CD8-positive, alpha-beta T cell (primary cell): ENCODE measurements at regions of chr1 and their contacts with region 1.

Region 1: DNA sequence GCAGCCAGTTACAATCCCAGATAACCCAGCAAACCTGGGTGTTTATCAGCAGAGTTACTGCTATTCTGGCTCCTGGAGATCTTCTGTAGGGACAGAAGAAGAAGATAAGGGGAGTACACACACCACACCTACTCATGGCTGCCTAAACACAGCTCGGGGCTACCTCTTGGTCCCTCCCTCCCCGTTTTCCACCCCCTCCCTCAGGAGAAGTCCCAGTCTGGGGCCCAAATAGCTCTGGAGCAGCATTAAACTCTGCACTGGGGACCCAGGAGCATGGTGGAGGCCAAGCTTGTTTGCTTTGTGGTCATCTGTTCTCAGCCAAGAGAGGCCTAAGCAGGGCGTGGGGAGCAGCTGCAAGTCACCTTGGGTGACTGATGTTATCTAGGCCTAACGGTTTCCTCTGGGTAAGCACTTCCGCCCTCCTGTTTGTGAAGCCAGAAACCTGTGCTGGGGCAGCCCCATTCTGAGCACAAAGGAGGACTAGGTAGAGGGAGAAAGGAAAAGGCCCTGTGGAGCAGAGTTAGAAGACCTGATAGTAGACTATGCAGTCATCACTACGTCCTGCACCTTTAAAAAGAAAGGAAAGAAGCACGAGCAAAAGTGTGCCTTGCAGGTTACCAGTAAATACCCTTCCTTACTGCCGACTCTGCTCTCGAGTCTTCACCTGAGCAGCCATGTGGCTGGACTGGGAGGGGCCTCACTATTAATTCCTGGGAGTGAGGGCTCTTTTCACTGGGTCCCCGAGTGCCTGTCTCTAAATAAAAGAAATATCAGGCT is 2.0 kb upstream of the RCSD1 start:
- DNase-seq: peak; percentile 44 to 91 (median 73)
- ATAC-seq: peak; percentile 67
- H3K4me3 ChIP-seq: peak overlapping the region; percentile 28 to 96
- H3K4me3 Mint-ChIP-seq: peak overlapping the region; percentile 89
- H3K27ac ChIP-seq: peak overlapping the region; percentile 46 to 94
- H3K27ac Mint-ChIP-seq: peak overlapping the region; percentile 96
- H3K4me1 ChIP-seq: peaks cover 50% of the 10 kb centered on the region
- H3K4me1 Mint-ChIP-seq: peaks cover 63% of the 10 kb centered on the region
- H3K27me3 ChIP-seq: no peaks in the 10 kb centered on the region
- H3K27me3 Mint-ChIP-seq: no peaks in the 10 kb centered on the region
- CTCF ChIP-seq: no peak

Region 2: GRCh38 chr1:167578939-167579521 is 49.0 kb before region 1 on chr1:
- CTCF ChIA-PET with region 1: no interaction called
- POLR2A ChIA-PET with region 1: no interaction called
- intact Hi-C with region 1: no loop called
- DNase-seq: no peak
- ATAC-seq: no peak
- H3K4me3 ChIP-seq: no peak overlapping the region
- H3K4me3 Mint-ChIP-seq: no peak overlapping the region
- H3K27ac ChIP-seq: no peak overlapping the region
- H3K27ac Mint-ChIP-seq: no peak overlapping the region
- H3K4me1 ChIP-seq: no peaks in the 10 kb centered on the region
- H3K4me1 Mint-ChIP-seq: no peaks in the 10 kb centered on the region
- H3K27me3 ChIP-seq: no peaks in the 10 kb centered on the region
- H3K27me3 Mint-ChIP-seq: no peaks in the 10 kb centered on the region
- CTCF ChIP-seq: no peak

Region 3: DNA sequence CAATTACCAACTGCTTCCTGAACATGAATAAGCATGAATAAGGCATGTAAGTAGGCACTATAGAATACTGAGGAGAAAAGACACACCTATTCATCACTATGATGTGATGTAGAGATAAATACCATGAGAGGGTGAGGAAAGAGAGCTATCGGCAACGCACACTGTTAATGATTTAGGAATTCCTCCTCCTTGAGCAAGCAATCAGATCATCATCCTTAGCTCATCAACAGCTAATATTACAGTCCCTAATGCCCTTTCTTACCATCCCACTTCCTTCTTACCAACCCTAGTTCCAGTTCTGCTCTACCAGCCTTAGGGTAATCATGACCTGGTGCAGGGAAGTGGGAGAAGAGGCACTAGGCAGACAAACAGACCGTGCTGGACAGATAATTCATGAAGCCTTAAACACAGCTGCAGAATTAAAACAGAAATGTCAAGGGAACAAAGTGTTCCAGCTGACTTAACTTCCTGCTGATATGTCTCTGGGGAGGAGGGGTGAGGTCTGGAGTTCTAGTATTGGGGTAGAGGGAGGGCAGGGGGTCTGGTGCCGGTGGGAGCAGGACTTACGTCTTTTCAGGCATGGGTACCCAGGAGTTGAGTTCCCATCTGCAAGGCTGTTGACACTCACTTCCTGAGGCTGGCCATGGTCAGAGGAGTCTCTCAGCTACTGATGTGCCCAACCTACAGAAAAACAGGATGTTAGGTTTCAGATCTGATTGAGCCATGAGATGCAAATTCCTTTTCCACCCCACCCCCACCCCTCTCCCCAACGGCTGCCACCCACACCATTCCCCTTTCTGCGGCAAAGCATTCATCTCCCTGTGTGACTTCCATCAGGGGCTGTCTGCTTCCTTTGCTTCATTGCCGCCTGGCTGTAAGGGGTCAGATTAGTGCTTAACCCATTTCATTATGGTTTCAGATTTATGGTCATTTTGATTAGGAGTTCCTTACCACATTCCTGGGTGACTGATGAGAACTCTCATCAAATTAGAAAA is 10.6 kb before region 1 on chr1:
- CTCF ChIA-PET with region 1: interaction called, 7 read pairs
- POLR2A ChIA-PET with region 1: interaction called, 86 read pairs
- intact Hi-C with region 1: loop called in 1 of 2 experiments (anchors 2 kb)
- DNase-seq: peak in 4 of 9 experiments; percentile 31 to 68 (median 46)
- ATAC-seq: peak; percentile 49
- H3K4me3 ChIP-seq: peak overlapping the region in 1 of 2 experiments; percentile 6
- H3K4me3 Mint-ChIP-seq: peak overlapping the region; percentile 60
- H3K27ac ChIP-seq: peak overlapping the region; percentile 9 to 59
- H3K27ac Mint-ChIP-seq: peak overlapping the region; percentile 92
- H3K4me1 ChIP-seq: peaks cover 39% of the 10 kb centered on the region
- H3K4me1 Mint-ChIP-seq: peaks cover 59% of the 10 kb centered on the region
- H3K27me3 ChIP-seq: no peaks in the 10 kb centered on the region
- H3K27me3 Mint-ChIP-seq: no peaks in the 10 kb centered on the region
- CTCF ChIP-seq: no peak

Region 4: GRCh38 chr1:167641786-167642500 is 13.9 kb after region 1 on chr1:
- CTCF ChIA-PET with region 1: interaction called, 23 read pairs
- POLR2A ChIA-PET with region 1: interaction called, 22 read pairs
- intact Hi-C with region 1: loop called (anchors 1 to 2 kb)
- DNase-seq: peak in 3 of 9 experiments; percentile 42 to 59 (median 51)
- ATAC-seq: peak; percentile 50
- H3K4me3 ChIP-seq: no peak overlapping the region
- H3K4me3 Mint-ChIP-seq: peak overlapping the region; percentile 62
- H3K27ac ChIP-seq: peak overlapping the region in 1 of 2 experiments; percentile 46
- H3K27ac Mint-ChIP-seq: peak overlapping the region; percentile 84
- H3K4me1 ChIP-seq: peaks cover 83% of the 10 kb centered on the region
- H3K4me1 Mint-ChIP-seq: peaks cover 96% of the 10 kb centered on the region
- H3K27me3 ChIP-seq: no peaks in the 10 kb centered on the region
- H3K27me3 Mint-ChIP-seq: no peaks in the 10 kb centered on the region
- CTCF ChIP-seq: no peak